ENCODE measurements at regions of chr9 and their contacts with region 1.

Region 1: DNA sequence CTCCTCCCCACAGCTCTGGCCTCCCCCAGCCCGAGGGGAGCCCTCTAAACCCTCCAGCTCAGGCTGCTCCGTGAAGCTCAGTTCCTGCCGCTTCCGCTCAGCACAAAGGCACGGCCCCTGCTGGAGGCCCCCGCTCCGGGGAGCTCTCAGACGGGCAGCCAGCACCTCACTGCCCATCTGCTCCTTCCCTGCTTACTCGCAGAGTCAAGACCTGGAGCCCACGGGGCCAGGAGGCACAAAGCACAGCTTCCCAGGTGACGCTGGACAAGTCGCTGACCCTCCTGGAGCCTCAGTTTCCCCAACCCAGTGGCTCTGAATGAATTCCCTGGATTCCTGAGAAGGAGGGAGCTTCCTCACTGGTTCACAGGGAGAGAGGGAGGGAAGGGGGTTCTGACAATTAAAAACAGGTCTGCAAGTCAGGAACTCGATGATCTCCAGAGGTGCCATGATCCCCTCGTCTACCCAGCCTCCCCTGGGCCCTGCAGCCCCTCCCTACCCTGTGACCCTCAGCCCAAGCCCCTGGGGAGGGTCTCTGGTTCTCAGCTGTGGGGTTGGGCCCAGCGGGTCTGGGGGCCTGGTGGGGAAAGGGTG is 36.2 kb downstream of the VAV2 start:
- DNase-seq: peak; percentile 72
- ATAC-seq: peak; percentile 48
- H3K4me3 ChIP-seq: peak overlapping the region; percentile 25 to 69 (median 51)
- H3K4me3 Mint-ChIP-seq: peak overlapping the region; percentile 83
- H3K27ac ChIP-seq: peak overlapping the region; percentile 93 to 94
- H3K27ac Mint-ChIP-seq: peak overlapping the region; percentile 98
- H3K4me1 ChIP-seq: peaks cover 66 to 72% of the 10 kb centered on the region in 2 donors
- H3K4me1 Mint-ChIP-seq: peaks cover 67% of the 10 kb centered on the region
- H3K27me3 ChIP-seq: no peaks in the 10 kb centered on the region
- H3K27me3 Mint-ChIP-seq: no peaks in the 10 kb centered on the region
- CTCF ChIP-seq: no peak

Region 2: GRCh38 chr9:133787754-133788025 is 168.2 kb before region 1 on chr9:
- CTCF ChIA-PET with region 1: interaction called, 10 read pairs
- POLR2A ChIA-PET with region 1: interaction called, 9 read pairs
- intact Hi-C with region 1: loop called (anchors 2 kb)
- DNase-seq: peak; percentile 70
- ATAC-seq: peak; percentile 73
- H3K4me3 ChIP-seq: peak overlapping the region in 1 of 5 experiments; percentile 23
- H3K4me3 Mint-ChIP-seq: peak overlapping the region; percentile 84
- H3K27ac ChIP-seq: peak overlapping the region; percentile 87 to 95
- H3K27ac Mint-ChIP-seq: peak overlapping the region; percentile 97
- H3K4me1 ChIP-seq: peaks cover 74 to 78% of the 10 kb centered on the region in 2 donors
- H3K4me1 Mint-ChIP-seq: peaks cover 86% of the 10 kb centered on the region
- H3K27me3 ChIP-seq: no peaks in the 10 kb centered on the region
- H3K27me3 Mint-ChIP-seq: no peaks in the 10 kb centered on the region
- CTCF ChIP-seq: no peak

Region 3: DNA sequence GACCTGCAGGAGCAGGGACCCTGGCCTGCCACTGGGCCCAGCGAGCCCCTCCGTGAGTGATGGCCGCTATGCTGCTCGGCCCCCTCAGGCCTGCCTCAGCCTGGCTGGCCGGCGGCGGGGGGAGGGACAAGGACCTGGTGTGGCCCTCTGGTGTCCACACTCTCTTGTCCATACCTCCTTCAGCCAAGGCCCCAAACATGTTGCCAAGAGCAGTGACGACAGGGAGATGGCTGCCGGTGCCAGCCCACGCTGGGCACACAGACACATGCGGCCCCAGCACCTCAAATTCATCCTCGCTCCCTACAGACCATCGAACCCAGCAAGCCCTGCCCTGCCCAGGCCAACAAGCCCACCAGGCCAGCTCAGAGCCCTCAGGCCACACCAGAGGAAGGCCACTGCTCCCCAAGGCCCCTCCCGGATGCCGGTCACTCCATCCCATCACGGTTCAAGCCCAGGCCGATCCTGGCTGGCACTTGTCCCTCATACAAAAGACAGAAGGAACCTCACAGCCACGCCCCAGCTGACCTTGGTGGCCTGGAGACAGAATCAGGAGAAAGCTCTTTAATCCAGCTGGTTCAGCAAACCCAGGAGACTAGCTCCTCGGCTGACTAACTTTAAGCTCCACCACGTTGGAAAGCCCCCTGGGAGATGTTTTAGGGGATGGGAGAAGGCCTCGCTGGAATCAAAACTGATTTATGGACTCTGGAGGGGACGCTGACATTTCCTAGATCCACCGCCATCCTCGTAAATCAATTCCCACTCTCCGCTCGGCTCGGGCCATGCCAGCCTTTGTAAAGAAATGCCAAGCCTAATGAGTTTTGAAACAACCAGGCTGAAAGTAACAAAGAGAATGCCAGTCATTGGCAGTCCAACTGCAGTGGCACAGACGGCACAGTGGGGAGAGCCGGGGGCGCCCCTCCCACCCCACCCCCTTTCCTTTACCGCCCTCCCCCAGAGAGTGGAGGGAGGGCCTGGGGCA is 48.7 kb before region 1 on chr9:
- CTCF ChIA-PET with region 1: no interaction called
- POLR2A ChIA-PET with region 1: no interaction called
- intact Hi-C with region 1: loop called (anchors 10 kb)
- DNase-seq: no peak
- ATAC-seq: no peak
- H3K4me3 ChIP-seq: no peak overlapping the region
- H3K4me3 Mint-ChIP-seq: no peak overlapping the region
- H3K27ac ChIP-seq: no peak overlapping the region
- H3K27ac Mint-ChIP-seq: no peak overlapping the region
- H3K4me1 ChIP-seq: peaks cover 10 to 11% of the 10 kb centered on the region in 2 donors
- H3K4me1 Mint-ChIP-seq: peaks cover 58% of the 10 kb centered on the region
- H3K27me3 ChIP-seq: no peaks in the 10 kb centered on the region
- H3K27me3 Mint-ChIP-seq: no peaks in the 10 kb centered on the region
- CTCF ChIP-seq: no peak

Region 4: DNA sequence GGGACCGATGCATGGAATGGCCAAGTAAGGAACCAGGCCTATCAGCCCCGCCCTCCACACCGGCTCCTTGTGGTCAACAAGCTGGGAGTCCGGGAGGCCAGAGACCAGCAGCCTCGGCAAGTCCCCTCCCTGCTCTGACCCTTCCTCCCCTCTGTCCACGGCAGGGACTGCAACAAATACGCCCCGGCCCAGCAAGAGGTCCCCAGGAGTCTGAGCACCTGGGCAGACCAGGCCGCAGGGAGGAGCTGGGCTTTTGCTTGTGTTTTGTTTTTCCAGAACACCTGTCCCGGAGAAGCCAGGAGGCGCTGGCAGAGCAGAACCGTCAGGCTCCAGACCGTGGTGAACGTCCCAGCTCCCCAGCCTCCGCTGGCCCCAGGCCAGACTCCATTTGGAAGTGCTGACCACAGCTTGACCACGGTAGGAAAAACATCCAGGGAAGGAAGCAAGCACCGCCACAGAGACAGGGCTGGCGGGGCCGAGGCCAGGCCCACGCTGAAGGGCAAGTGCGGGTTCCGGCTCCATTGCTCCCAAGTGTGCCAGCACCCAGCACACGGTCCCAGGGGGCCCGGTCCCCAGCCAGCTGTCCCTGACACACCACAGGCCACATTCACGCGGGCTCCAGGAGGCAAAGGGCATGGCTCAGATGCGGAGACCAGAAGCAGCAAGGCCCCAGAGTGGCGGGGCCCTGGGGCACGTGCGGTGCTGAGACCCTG is 20.4 kb before region 1 on chr9:
- CTCF ChIA-PET with region 1: no interaction called
- POLR2A ChIA-PET with region 1: no interaction called
- intact Hi-C with region 1: no loop called
- DNase-seq: no peak
- ATAC-seq: no peak
- H3K4me3 ChIP-seq: no peak overlapping the region
- H3K4me3 Mint-ChIP-seq: no peak overlapping the region
- H3K27ac ChIP-seq: no peak overlapping the region
- H3K27ac Mint-ChIP-seq: no peak overlapping the region
- H3K4me1 ChIP-seq: peaks cover 8 to 10% of the 10 kb centered on the region in 2 donors
- H3K4me1 Mint-ChIP-seq: peaks cover 32% of the 10 kb centered on the region
- H3K27me3 ChIP-seq: no peaks in the 10 kb centered on the region
- H3K27me3 Mint-ChIP-seq: no peaks in the 10 kb centered on the region
- CTCF ChIP-seq: no peak

Region 5: DNA sequence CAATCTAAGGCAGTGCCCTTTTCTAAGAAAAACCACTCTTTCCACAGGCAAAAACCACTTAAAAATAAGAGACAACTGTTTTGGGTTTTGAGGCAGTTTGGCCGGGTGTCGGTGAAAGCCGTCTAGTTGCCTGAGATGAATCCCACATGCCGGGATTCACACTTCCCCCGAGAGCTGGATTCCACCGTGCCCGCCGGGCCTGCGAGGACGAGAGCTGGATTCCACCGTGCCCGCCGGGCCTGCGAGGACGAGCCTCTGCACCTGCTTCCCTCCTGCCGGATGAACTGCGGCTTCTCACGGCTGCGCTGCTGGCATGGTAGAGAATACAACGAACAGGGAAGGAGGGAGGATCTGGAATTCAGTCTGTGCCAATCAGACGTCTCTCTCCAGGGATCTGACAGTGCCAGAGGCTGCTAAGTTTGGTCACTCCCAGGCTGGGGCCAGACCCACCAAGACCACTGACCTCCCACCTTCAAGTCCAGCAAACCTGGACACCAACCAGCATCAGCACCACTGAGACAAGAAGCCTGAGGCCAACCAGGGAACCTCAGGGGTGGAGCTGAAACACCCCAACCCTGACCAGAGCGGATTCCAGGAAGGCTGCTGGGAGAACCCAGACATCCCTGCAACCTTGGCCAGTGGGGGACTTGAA is 13.2 kb after region 1 on chr9:
- CTCF ChIA-PET with region 1: interaction called, 3 read pairs
- POLR2A ChIA-PET with region 1: interaction called, 11 read pairs
- intact Hi-C with region 1: loop called (anchors 2 kb)
- DNase-seq: no peak
- ATAC-seq: no peak
- H3K4me3 ChIP-seq: no peak overlapping the region
- H3K4me3 Mint-ChIP-seq: peak overlapping the region; percentile 71
- H3K27ac ChIP-seq: peak overlapping the region; percentile 41 to 57
- H3K27ac Mint-ChIP-seq: peak overlapping the region; percentile 61
- H3K4me1 ChIP-seq: peaks cover 64 to 69% of the 10 kb centered on the region in 2 donors
- H3K4me1 Mint-ChIP-seq: peaks cover 85% of the 10 kb centered on the region
- H3K27me3 ChIP-seq: no peaks in the 10 kb centered on the region
- H3K27me3 Mint-ChIP-seq: no peaks in the 10 kb centered on the region
- CTCF ChIP-seq: no peak

Measured in B cell (primary cell).